ENCODE measurements at regions of chr7 and their contacts with region 1.

Region 1: DNA sequence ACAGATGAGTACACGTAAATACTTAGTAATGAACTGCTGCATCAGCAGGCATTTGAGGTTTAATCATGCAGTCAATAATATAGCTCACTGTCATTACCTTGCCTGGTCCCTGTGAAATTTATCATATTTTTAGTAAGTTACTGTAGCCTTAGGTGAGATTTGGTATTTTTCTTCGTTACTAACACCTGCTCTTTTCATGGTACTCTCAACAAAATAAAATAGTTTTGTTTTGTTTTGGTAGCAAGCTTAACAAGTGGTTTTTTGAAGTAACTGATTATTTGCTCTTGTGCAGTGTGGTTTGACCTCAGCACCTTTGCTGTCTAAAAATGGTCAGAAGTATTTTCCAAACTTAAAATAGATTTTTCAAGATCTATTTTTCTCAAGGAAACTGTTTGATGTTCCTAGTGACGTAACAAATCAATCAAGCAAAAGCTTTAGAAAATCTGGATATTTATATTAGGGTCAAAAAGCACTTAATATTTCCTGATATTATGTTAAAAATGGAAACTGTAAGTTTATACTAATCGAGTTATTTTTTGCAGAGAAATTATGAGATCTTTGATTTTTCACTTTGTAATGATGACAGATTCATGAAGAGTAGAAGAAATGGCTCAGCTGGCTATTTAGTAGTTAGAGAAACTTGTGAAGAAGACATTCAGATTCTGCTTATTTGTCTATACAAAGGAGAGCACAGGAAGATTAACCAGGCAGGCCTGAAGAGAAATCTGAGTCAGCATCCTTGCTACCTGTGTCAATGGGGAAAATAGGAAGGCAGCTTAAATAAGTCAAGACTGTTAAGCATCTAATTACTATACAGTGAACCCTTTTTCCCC is 21.0 kb upstream of the RPA3 start:
- DNase-seq: no peak
- H3K4me3 ChIP-seq: no peak overlapping the region
- H3K27ac ChIP-seq: no peak overlapping the region
- H3K4me1 ChIP-seq: no peaks in the 10 kb centered on the region
- H3K27me3 ChIP-seq: no peaks in the 10 kb centered on the region
- CTCF ChIP-seq: no peak
- POLR2A ChIP-seq: no peak

Region 2: GRCh38 chr7:7681179-7681935 is 58.1 kb before region 1 on chr7:
- intact Hi-C with region 1: loop called (anchors 10 kb)
- DNase-seq: no peak
- H3K4me3 ChIP-seq: peak overlapping the region in 2 of 3 donors; percentile 23 to 57
- H3K27ac ChIP-seq: peak overlapping the region; percentile 83 to 84
- H3K4me1 ChIP-seq: peaks cover 0 to 7% of the 10 kb centered on the region in 2 donors
- H3K27me3 ChIP-seq: no peaks in the 10 kb centered on the region
- CTCF ChIP-seq: peak; percentile 55 to 68 (median 64)
- POLR2A ChIP-seq: no peak

Measured in breast epithelium (tissue), 4 donors.